CD8-positive, alpha-beta T cell (primary cell): ENCODE measurements at regions of chr9 and their contacts with region 1.

Region 1: GRCh38 chr9:112174218-112174964 is 706 bp downstream of the SUSD1 start:
- DNase-seq: peak; percentile 45 to 87 (median 74)
- ATAC-seq: peak; percentile 70
- H3K4me3 ChIP-seq: peak overlapping the region; percentile 43 to 73
- H3K4me3 Mint-ChIP-seq: peak overlapping the region; percentile 91
- H3K27ac ChIP-seq: peak overlapping the region; percentile 35 to 56
- H3K27ac Mint-ChIP-seq: peak overlapping the region; percentile 87
- H3K4me1 ChIP-seq: peaks cover 46% of the 10 kb centered on the region
- H3K4me1 Mint-ChIP-seq: peaks cover 73% of the 10 kb centered on the region
- H3K27me3 ChIP-seq: no peaks in the 10 kb centered on the region
- H3K27me3 Mint-ChIP-seq: no peaks in the 10 kb centered on the region
- CTCF ChIP-seq: no peak

Region 2: GRCh38 chr9:112104901-112105300 is 69.5 kb before region 1 on chr9:
- CTCF ChIA-PET with region 1: interaction called, 6 read pairs
- POLR2A ChIA-PET with region 1: no interaction called
- intact Hi-C with region 1: loop called in 1 of 2 experiments (anchors 5 kb)
- DNase-seq: no peak
- ATAC-seq: no peak
- H3K4me3 ChIP-seq: no peak overlapping the region
- H3K4me3 Mint-ChIP-seq: no peak overlapping the region
- H3K27ac ChIP-seq: no peak overlapping the region
- H3K27ac Mint-ChIP-seq: no peak overlapping the region
- H3K4me1 ChIP-seq: no peaks in the 10 kb centered on the region
- H3K4me1 Mint-ChIP-seq: no peaks in the 10 kb centered on the region
- H3K27me3 ChIP-seq: no peaks in the 10 kb centered on the region
- H3K27me3 Mint-ChIP-seq: no peaks in the 10 kb centered on the region
- CTCF ChIP-seq: no peak

Region 3: GRCh38 chr9:112115970-112116753 is 58.2 kb before region 1 on chr9:
- CTCF ChIA-PET with region 1: no interaction called
- POLR2A ChIA-PET with region 1: no interaction called
- intact Hi-C with region 1: no loop called
- DNase-seq: no peak
- ATAC-seq: no peak
- H3K4me3 ChIP-seq: no peak overlapping the region
- H3K4me3 Mint-ChIP-seq: no peak overlapping the region
- H3K27ac ChIP-seq: no peak overlapping the region
- H3K27ac Mint-ChIP-seq: no peak overlapping the region
- H3K4me1 ChIP-seq: no peaks in the 10 kb centered on the region
- H3K4me1 Mint-ChIP-seq: no peaks in the 10 kb centered on the region
- H3K27me3 ChIP-seq: no peaks in the 10 kb centered on the region
- H3K27me3 Mint-ChIP-seq: no peaks in the 10 kb centered on the region
- CTCF ChIP-seq: no peak

Region 4: DNA sequence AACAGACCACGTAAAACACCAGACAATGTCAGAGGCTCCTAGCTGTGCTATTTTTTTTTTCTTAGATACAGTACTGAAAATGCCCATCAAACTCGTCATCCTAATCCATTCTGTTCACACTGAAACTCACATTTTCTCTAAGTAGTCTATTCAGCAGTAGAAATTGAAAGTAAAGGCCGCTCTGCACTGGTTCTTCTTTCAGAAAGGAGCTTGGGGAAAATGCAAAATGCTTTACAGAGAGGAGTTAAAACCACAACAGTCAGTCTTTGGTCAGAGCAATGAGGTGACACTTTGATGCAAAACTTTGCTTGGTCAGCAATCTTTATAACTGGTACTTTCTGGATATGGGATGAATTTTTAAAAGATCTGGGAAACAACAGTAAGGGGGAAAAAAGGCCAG is 44.5 kb after region 1 on chr9:
- CTCF ChIA-PET with region 1: no interaction called
- POLR2A ChIA-PET with region 1: interaction called, 4 read pairs
- intact Hi-C with region 1: loop called (anchors 5 kb)
- DNase-seq: peak in 2 of 9 experiments; percentile 24 to 47
- ATAC-seq: no peak
- H3K4me3 ChIP-seq: no peak overlapping the region
- H3K4me3 Mint-ChIP-seq: peak overlapping the region; percentile 38
- H3K27ac ChIP-seq: peak overlapping the region in 1 of 2 experiments; percentile 29
- H3K27ac Mint-ChIP-seq: peak overlapping the region; percentile 33
- H3K4me1 ChIP-seq: peaks cover 8% of the 10 kb centered on the region
- H3K4me1 Mint-ChIP-seq: peaks cover 20% of the 10 kb centered on the region
- H3K27me3 ChIP-seq: no peaks in the 10 kb centered on the region
- H3K27me3 Mint-ChIP-seq: no peaks in the 10 kb centered on the region
- CTCF ChIP-seq: no peak

Region 5: GRCh38 chr9:112232233-112232632 is 57.8 kb after region 1 on chr9:
- CTCF ChIA-PET with region 1: no interaction called
- POLR2A ChIA-PET with region 1: no interaction called
- intact Hi-C with region 1: no loop called
- DNase-seq: no peak
- ATAC-seq: no peak
- H3K4me3 ChIP-seq: no peak overlapping the region
- H3K4me3 Mint-ChIP-seq: no peak overlapping the region
- H3K27ac ChIP-seq: no peak overlapping the region
- H3K27ac Mint-ChIP-seq: peak overlapping the region; percentile 49
- H3K4me1 ChIP-seq: no peaks in the 10 kb centered on the region
- H3K4me1 Mint-ChIP-seq: no peaks in the 10 kb centered on the region
- H3K27me3 ChIP-seq: no peaks in the 10 kb centered on the region
- H3K27me3 Mint-ChIP-seq: no peaks in the 10 kb centered on the region
- CTCF ChIP-seq: no peak

Region 6: GRCh38 chr9:112379177-112380101 is 205.0 kb after region 1 on chr9:
- CTCF ChIA-PET with region 1: no interaction called
- POLR2A ChIA-PET with region 1: interaction called, 7 read pairs
- intact Hi-C with region 1: loop called in 1 of 2 experiments (anchors 5 kb)
- DNase-seq: peak; percentile 93 to 99 (median 97)
- ATAC-seq: peak; percentile 95
- H3K4me3 ChIP-seq: peak overlapping the region; percentile 81 to 96
- H3K4me3 Mint-ChIP-seq: peak overlapping the region; percentile 99
- H3K27ac ChIP-seq: peak overlapping the region; percentile 77 to 92
- H3K27ac Mint-ChIP-seq: peak overlapping the region; percentile 96
- H3K4me1 ChIP-seq: peaks cover 27% of the 10 kb centered on the region
- H3K4me1 Mint-ChIP-seq: peaks cover 54% of the 10 kb centered on the region
- H3K27me3 ChIP-seq: no peaks in the 10 kb centered on the region
- H3K27me3 Mint-ChIP-seq: no peaks in the 10 kb centered on the region
- CTCF ChIP-seq: no peak

Region 7: DNA sequence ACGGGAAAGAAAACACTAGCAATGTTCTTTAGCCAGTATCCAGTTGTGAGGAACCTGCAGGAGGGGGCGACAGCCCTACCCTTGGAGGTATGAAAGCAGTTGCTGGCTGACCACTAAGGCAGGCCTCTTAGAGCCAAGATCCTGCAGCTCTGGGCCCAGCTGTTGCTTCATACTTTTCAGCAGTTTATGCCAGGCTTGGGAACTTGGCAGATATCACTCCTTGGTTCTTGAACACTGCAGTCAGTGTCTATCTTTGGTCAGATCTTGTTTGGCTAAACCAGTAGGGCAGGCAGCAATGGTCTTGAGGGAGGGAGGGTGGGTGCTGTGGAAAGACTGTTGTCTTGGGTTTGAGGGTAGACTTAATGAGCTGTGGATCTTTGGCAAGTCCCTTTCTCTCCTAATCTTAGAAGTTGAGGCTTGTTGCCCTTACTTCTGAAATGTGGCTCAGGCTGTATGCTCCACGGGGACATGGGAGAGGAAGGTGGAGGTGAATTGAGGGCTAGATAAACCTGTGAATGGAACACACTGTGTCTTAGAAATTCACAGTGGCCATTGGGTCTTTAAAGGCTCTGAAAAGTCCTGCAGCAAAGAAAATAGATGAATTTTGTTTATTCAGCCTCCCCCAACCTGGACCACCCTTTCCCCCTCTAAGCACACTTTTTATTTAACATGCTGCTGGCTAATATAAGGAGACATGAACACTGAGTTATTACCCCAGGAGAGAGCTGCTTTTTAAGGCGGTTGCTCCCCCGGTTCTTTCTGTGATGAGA is 1739.2 kb after region 1 on chr9:
- CTCF ChIA-PET with region 1: no interaction called
- POLR2A ChIA-PET with region 1: no interaction called
- intact Hi-C with region 1: no loop called
- DNase-seq: no peak
- ATAC-seq: no peak
- H3K4me3 ChIP-seq: no peak overlapping the region
- H3K4me3 Mint-ChIP-seq: no peak overlapping the region
- H3K27ac ChIP-seq: no peak overlapping the region
- H3K27ac Mint-ChIP-seq: no peak overlapping the region
- H3K4me1 ChIP-seq: no peaks in the 10 kb centered on the region
- H3K4me1 Mint-ChIP-seq: no peaks in the 10 kb centered on the region
- H3K27me3 ChIP-seq: no peaks in the 10 kb centered on the region
- H3K27me3 Mint-ChIP-seq: no peaks in the 10 kb centered on the region
- CTCF ChIP-seq: no peak